Natural killer cell (primary cell): ENCODE measurements at regions of chr9 and their contacts with region 1.

Region 1: DNA sequence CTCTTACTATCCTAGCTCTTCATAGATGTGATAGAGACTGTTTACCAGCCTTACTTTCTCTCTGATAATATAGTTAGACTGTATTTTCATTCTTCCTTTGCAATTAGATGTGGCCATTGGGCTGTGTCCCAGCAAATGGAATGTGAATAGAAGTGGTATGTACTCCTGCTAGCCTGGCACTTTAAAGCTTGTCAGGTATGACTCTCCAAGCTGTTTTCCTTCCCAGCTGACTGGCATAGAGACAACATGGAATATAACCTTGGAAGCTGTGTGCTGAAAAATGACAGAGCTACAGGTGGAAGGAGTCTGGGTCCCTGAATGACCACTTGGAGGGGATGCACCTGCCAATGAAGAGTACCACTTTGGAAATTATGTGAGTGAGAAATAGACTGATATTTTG is 116.2 kb downstream of the DIRAS2 start:
- DNase-seq: no peak
- ATAC-seq: no peak
- H3K4me3 ChIP-seq: no peak overlapping the region
- H3K4me3 Mint-ChIP-seq: no peak overlapping the region
- H3K27ac ChIP-seq: no peak overlapping the region
- H3K27ac Mint-ChIP-seq: no peak overlapping the region
- H3K4me1 ChIP-seq: no peaks in the 10 kb centered on the region
- H3K4me1 Mint-ChIP-seq: no peaks in the 10 kb centered on the region
- H3K27me3 ChIP-seq: peaks cover 2% of the 10 kb centered on the region
- H3K27me3 Mint-ChIP-seq: peaks cover 19 to 52% of the 10 kb centered on the region in 2 donors
- CTCF ChIP-seq: no peak

Region 2: GRCh38 chr9:89654859-89655689 is 871.3 kb before region 1 on chr9:
- intact Hi-C with region 1: loop called (anchors 5 kb)
- DNase-seq: no peak
- ATAC-seq: no peak
- H3K4me3 ChIP-seq: no peak overlapping the region
- H3K4me3 Mint-ChIP-seq: no peak overlapping the region
- H3K27ac ChIP-seq: no peak overlapping the region
- H3K27ac Mint-ChIP-seq: no peak overlapping the region
- H3K4me1 ChIP-seq: peaks cover 19% of the 10 kb centered on the region
- H3K4me1 Mint-ChIP-seq: peaks cover 9 to 12% of the 10 kb centered on the region in 2 donors
- H3K27me3 ChIP-seq: no peaks in the 10 kb centered on the region
- H3K27me3 Mint-ChIP-seq: peaks cover 0 to 19% of the 10 kb centered on the region in 2 donors
- CTCF ChIP-seq: no peak

Region 3: DNA sequence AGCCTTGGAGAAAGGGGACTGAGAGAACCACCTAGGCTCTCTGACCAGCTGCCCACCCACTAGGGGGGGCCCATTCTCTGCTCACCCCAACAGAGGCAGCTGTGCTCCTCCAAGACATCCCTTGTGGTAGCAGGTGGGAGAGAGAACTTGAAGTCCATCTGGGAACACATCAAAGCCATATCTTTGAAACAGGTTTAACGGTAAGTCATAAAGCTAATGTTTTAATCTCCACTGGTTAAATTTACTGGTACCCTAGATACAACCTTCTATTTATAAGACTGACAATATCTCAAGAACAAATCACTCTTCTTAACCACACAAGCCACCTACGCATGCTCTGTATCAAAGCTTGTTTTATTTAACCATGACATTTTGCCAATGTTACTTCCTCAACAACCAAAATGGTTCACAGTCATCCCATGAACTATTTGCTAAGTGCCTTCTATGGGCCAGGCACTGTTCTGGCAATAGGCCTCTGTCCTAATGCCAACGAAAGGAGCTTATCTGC is 814.9 kb after region 1 on chr9:
- intact Hi-C with region 1: no loop called
- DNase-seq: no peak
- ATAC-seq: no peak
- H3K4me3 ChIP-seq: no peak overlapping the region
- H3K4me3 Mint-ChIP-seq: peak overlapping the region; percentile 28
- H3K27ac ChIP-seq: no peak overlapping the region
- H3K27ac Mint-ChIP-seq: peak overlapping the region; percentile 27 to 61
- H3K4me1 ChIP-seq: peaks cover 16% of the 10 kb centered on the region
- H3K4me1 Mint-ChIP-seq: peaks cover 56 to 63% of the 10 kb centered on the region in 2 donors
- H3K27me3 ChIP-seq: no peaks in the 10 kb centered on the region
- H3K27me3 Mint-ChIP-seq: no peaks in the 10 kb centered on the region
- CTCF ChIP-seq: no peak